ENCODE measurements at regions of chr3 and their contacts with region 1.

Region 1: GRCh38 chr3:156017352-156018030 is 102.9 kb upstream of the KCNAB1 start:
- DNase-seq: no peak
- H3K4me3 Mint-ChIP-seq: no peak overlapping the region
- H3K27ac Mint-ChIP-seq: no peak overlapping the region
- H3K4me1 Mint-ChIP-seq: no peaks in the 10 kb centered on the region
- H3K27me3 Mint-ChIP-seq: peaks cover 3% of the 10 kb centered on the region
- CTCF ChIP-seq: no peak

Region 2: DNA sequence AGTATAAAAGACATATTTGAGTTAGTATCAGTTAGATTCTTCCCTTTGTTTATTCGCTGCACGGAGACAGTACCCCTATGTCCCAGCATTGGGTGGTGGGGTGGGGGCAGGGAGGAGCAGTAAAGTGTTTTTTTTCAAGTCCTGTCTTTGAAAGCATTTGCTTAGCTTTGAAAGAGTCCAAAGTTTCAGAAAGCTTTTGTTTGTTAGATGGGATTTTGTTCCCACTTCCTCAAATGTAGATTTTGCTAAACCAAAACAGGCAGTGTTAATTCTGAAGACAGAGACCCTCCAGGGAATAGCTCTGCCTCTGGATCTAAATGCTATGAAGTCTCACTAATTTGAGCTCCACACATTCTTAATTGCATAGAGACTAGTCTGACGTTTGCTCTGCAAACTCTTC is 11.8 kb before region 1 on chr3:
- CTCF ChIA-PET with region 1: interaction called, 14 read pairs
- POLR2A ChIA-PET with region 1: no interaction called
- intact Hi-C with region 1: no loop called
- DNase-seq: no peak
- H3K4me3 Mint-ChIP-seq: no peak overlapping the region
- H3K27ac Mint-ChIP-seq: no peak overlapping the region
- H3K4me1 Mint-ChIP-seq: no peaks in the 10 kb centered on the region
- H3K27me3 Mint-ChIP-seq: peaks cover 25% of the 10 kb centered on the region
- CTCF ChIP-seq: no peak